Pancreas (tissue), 10 donors: ENCODE measurements at regions of chr21 and their contacts with region 1.

Region 1: DNA sequence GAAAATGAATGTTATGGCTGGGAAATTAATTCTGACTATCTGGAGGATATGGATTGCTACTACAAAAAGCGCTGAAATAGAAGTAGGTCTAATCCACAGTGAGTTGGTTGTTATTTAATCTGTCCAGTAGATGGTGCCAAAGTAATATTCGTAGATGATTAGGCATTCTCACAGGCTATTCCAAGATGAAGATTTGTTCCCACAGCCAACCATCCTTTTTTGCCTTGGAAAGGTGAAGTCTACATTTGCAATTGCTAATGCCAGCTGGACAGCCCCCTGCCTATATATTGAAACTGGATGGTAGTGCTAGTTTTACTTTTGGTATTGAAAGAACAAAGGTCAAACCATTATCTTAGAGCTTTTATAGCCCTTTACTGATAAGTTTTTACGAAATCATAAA is 43.8 kb downstream of the RBM11 start:
- DNase-seq: no peak
- ATAC-seq: peak; percentile 77 to 96 (median 92)
- H3K4me3 ChIP-seq: no peak overlapping the region
- H3K27ac ChIP-seq: no peak overlapping the region
- H3K4me1 ChIP-seq: peaks cover 5 to 7% (median 6%) of the 10 kb centered on the region in 3 donors
- H3K27me3 ChIP-seq: no peaks in the 10 kb centered on the region
- CTCF ChIP-seq: peak; percentile 18 to 48 (median 32)

Region 2: DNA sequence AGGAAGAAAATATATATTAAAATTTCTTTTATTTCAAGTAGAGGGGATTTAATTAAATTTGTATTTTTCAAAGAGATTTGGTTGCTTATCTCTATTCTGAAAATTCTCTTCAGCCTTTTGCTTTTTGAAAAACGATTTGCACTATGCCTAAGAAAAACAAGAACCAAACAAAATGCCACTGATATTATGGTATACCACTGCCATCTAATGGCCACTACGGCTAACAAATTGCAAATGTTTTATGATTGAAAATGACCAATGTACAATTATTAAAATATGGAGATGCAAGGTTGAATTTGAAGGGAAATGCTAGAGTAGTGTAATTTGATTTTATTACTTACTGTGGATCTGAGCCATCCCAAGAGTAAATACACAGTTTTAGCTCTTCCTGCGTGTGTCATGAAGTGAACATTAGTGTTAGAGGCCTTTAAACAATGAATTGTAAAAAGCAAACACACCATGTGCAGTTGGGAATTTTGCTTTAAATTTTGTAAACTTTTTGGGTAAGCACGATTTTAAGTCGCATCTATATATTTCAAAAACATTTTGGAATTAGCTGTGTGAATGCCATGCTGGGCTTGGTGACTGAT is 1332.6 kb after region 1 on chr21:
- intact Hi-C with region 1: loop called in 1 of 3 experiments (anchors 10 kb)
- DNase-seq: no peak
- ATAC-seq: peak in 3 of 4 donors; percentile 83
- H3K4me3 ChIP-seq: no peak overlapping the region
- H3K27ac ChIP-seq: no peak overlapping the region
- H3K4me1 ChIP-seq: no peaks in the 10 kb centered on the region
- H3K27me3 ChIP-seq: no peaks in the 10 kb centered on the region
- CTCF ChIP-seq: peak in 3 of 4 donors; percentile 39 to 43 (median 42)